Activated CD8-positive, alpha-beta T cell treated with anti-CD3 and anti-CD28 coated beads, Interleukin-2, amount 10 ng/mL, durations not matched to agents 7 days and 5 days (primary cell): ENCODE measurements at regions of chr1 and their contacts with region 1.

Region 1: GRCh38 chr1:201895913-201896807 is 7.5 kb downstream of the SHISA4 start:
- DNase-seq: peak; percentile 92
- ATAC-seq: peak; percentile 94
- H3K4me3 Mint-ChIP-seq: peak overlapping the region; percentile 48
- H3K27ac Mint-ChIP-seq: peak overlapping the region; percentile 82
- H3K4me1 Mint-ChIP-seq: peaks cover 30% of the 10 kb centered on the region
- H3K27me3 Mint-ChIP-seq: peaks cover 13% of the 10 kb centered on the region

Region 2: GRCh38 chr1:201845331-201846083 is 50.7 kb before region 1 on chr1:
- CTCF ChIA-PET with region 1: interaction called, 12 read pairs
- POLR2A ChIA-PET with region 1: no interaction called
- DNase-seq: no peak
- ATAC-seq: no peak
- H3K4me3 Mint-ChIP-seq: no peak overlapping the region
- H3K27ac Mint-ChIP-seq: no peak overlapping the region
- H3K4me1 Mint-ChIP-seq: no peaks in the 10 kb centered on the region
- H3K27me3 Mint-ChIP-seq: no peaks in the 10 kb centered on the region

Region 3: DNA sequence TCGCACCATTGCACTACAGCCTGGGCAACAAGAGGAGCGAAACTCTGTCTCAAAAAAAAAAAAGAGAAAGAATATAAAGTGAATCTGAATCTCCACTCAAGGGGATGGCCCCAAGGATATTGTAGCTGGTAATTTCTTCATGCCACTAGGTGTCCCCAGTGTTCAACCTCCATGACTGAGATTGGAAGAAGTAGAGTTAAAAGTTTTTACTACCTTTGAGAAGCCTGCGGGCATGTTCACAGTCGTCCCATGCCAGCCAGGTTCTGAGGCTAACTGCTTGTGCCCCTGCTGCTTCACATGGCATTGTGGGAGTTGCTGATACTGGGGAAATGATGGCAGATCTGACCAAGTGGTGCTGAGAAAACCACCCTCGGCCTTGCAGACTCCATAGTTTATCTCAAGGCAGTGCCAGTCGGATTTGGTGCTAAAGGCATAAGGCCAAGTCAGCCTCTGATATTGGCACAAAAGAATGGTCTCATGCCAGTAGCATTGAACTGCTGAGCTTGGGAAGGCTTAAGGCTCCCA is 18.2 kb before region 1 on chr1:
- CTCF ChIA-PET with region 1: interaction called, 56 read pairs
- POLR2A ChIA-PET with region 1: interaction called, 5 read pairs
- DNase-seq: peak; percentile 47
- ATAC-seq: peak; percentile 69
- H3K4me3 Mint-ChIP-seq: no peak overlapping the region
- H3K27ac Mint-ChIP-seq: no peak overlapping the region
- H3K4me1 Mint-ChIP-seq: no peaks in the 10 kb centered on the region
- H3K27me3 Mint-ChIP-seq: no peaks in the 10 kb centered on the region

Region 4: DNA sequence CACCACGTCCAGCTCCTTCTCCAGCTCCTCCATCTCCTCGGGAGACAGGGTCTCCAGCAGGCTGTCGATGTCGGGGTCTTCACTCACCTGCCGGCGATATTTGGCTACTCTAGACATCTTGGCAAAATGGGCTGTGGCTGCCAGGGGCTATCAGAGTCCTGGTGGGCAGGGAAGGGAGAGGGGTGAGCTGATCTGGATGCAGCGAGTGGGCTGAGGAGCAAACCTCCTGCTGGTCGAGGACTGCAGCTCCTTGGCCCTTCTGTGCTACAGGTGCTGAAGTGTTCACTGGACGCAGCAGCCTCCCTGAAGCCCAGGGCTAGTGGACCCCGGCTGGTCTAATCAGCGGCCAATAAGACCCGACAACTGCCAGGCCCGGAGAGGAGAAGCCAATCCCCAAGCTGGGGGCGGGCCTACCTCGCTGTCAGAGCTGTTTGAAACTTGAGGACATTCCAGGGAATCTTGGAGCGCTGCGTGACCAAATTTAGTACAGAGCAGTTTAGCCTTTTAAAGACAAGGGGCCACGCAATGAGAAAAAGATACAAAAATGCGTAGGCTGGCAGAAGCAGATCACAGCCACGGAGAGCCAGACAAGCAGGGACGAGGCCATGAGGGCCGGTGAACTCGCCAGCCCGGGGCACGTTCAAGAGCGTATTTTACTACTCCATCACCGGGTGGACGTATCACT is 50.2 kb after region 1 on chr1 and contains the start of gene LMOD1:
- CTCF ChIA-PET with region 1: interaction called, 22 read pairs
- POLR2A ChIA-PET with region 1: no interaction called
- DNase-seq: no peak
- ATAC-seq: no peak
- H3K4me3 Mint-ChIP-seq: no peak within 1 kb of the TSS
- H3K27ac Mint-ChIP-seq: no peak within 1 kb of the TSS
- H3K4me1 Mint-ChIP-seq: peaks cover 7% of the 10 kb centered on the region
- H3K27me3 Mint-ChIP-seq: peaks cover 59% of the 10 kb centered on the region
- total RNA-seq, gene LMOD1: not detected

Region 5: GRCh38 chr1:201970334-201971159 is 74.4 kb after region 1 on chr1:
- CTCF ChIA-PET with region 1: interaction called, 145 read pairs
- POLR2A ChIA-PET with region 1: interaction called, 5 read pairs
- DNase-seq: no peak
- ATAC-seq: no peak
- H3K4me3 Mint-ChIP-seq: no peak overlapping the region
- H3K27ac Mint-ChIP-seq: no peak overlapping the region
- H3K4me1 Mint-ChIP-seq: peaks cover 5% of the 10 kb centered on the region
- H3K27me3 Mint-ChIP-seq: peaks cover 8% of the 10 kb centered on the region

Region 6: GRCh38 chr1:201990427-201990826 is 94.3 kb after region 1 on chr1:
- CTCF ChIA-PET with region 1: interaction called, 13 read pairs
- POLR2A ChIA-PET with region 1: no interaction called
- DNase-seq: no peak
- ATAC-seq: no peak
- H3K4me3 Mint-ChIP-seq: no peak overlapping the region
- H3K27ac Mint-ChIP-seq: no peak overlapping the region
- H3K4me1 Mint-ChIP-seq: no peaks in the 10 kb centered on the region
- H3K27me3 Mint-ChIP-seq: no peaks in the 10 kb centered on the region

Region 7: DNA sequence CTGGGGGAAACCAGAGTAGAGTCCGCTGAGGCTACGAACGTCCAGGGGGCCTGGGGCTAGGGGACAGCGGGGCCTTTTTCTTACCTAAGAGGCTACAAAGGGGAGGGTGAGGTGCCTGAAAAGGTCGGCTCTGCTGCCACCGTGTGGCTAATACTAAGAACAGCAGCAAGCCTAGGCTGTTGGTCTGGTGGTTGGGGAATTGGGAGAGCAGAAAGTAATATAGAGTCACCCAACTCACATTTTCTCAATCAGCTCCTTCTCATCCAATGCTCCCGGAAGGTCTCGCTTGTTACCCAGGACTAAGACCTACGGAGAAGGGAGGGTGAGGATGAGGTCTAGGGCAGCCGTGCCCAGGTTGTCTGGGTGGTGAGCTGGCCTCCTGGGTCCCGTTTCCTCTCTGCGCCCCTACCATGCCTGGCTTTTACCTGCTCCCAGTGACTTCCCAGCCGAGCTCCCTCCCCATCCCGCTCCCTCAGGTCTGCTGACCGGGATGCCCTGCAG is 239.1 kb after region 1 on chr1:
- CTCF ChIA-PET with region 1: interaction called, 34 read pairs
- POLR2A ChIA-PET with region 1: no interaction called
- DNase-seq: peak; percentile 67
- ATAC-seq: peak; percentile 77
- H3K4me3 Mint-ChIP-seq: no peak overlapping the region
- H3K27ac Mint-ChIP-seq: no peak overlapping the region
- H3K4me1 Mint-ChIP-seq: peaks cover 12% of the 10 kb centered on the region
- H3K27me3 Mint-ChIP-seq: no peaks in the 10 kb centered on the region